Activated CD4-positive, alpha-beta memory T cell treated with anti-CD3 and anti-CD28 coated beads, Interleukin-2, amount 10 ng/mL, durations not matched to agents 7 days and 5 days (primary cell): ENCODE measurements at regions of chr3 and their contacts with region 1.

Region 1: GRCh38 chr3:140941434-140942220 is at the start of gene SLC25A36:
- DNase-seq: peak; percentile 97
- H3K4me3 Mint-ChIP-seq: peak within 1 kb of the TSS; percentile 80
- H3K27ac Mint-ChIP-seq: peak within 1 kb of the TSS; percentile 86
- H3K4me1 Mint-ChIP-seq: peaks cover 30% of the 10 kb centered on the region
- H3K27me3 Mint-ChIP-seq: peaks cover 26% of the 10 kb centered on the region
- total RNA-seq, gene SLC25A36: 44.8 to 51.8 TPM

Region 2: GRCh38 chr3:140953028-140953960 is 11.7 kb after region 1 on chr3:
- CTCF ChIA-PET with region 1: interaction called, 5 read pairs
- POLR2A ChIA-PET with region 1: interaction called, 12 read pairs
- DNase-seq: no peak
- H3K4me3 Mint-ChIP-seq: no peak overlapping the region
- H3K27ac Mint-ChIP-seq: no peak overlapping the region
- H3K4me1 Mint-ChIP-seq: peaks cover 6% of the 10 kb centered on the region
- H3K27me3 Mint-ChIP-seq: no peaks in the 10 kb centered on the region